Activated T-helper 1 cell treated with anti-CD3 and anti-CD28 coated beads, Interleukin-12 subunit alpha, Interleukin-12 subunit beta, Interleukin-2, Interleukin-4 antibody, amounts not matched to agents 30 ng/mL and 10 ng/mL and 1 ng/mL, durations not matched to agents 14 hours and 24 hours and 36 hours (primary cell): ENCODE measurements at regions of chr12 and their contacts with region 1.

Region 1: GRCh38 chr12:95217377-95218149 is at the starts of genes FGD6 and VEZT:
- DNase-seq: peak; percentile 98
- H3K4me3 Mint-ChIP-seq: peak within 1 kb of the TSS; percentile 97
- H3K27ac Mint-ChIP-seq: peak within 1 kb of the TSS; percentile 98
- H3K4me1 Mint-ChIP-seq: peaks cover 37% of the 10 kb centered on the region
- H3K27me3 Mint-ChIP-seq: peaks cover 9% of the 10 kb centered on the region
- total RNA-seq, gene FGD6: 0.64 and 0.86 TPM in 2 replicates
- total RNA-seq, gene VEZT: 58.1 and 64.7 TPM in 2 replicates

Region 2: DNA sequence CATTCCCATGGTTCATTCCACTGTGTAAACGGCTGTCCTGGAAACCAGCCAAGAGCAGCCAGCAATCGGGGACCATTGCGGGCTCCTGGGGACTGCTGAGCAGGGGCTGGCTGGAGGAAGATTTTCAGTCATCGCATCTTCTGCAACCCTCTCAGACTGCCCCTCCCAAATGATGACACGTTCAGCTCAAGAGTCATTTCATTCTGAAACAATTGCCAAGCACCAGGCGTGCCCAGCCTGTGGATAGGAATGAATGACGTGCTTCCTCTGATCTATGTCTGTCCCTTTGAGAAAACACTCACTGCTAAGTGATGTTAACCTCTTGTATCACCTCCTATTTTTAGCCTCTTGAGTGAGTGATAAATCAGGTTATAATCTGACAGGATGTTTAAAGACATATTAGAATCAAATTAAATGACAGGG is 276.1 kb before region 1 on chr12:
- intact Hi-C with region 1: loop called (anchors 5 kb)
- DNase-seq: peak; percentile 39
- H3K4me3 Mint-ChIP-seq: no peak overlapping the region
- H3K27ac Mint-ChIP-seq: peak overlapping the region; percentile 63
- H3K4me1 Mint-ChIP-seq: peaks cover 43% of the 10 kb centered on the region
- H3K27me3 Mint-ChIP-seq: no peaks in the 10 kb centered on the region

Region 3: GRCh38 chr12:95072900-95073697 is 144.5 kb before region 1 on chr12 and contains the start of gene NR2C1:
- intact Hi-C with region 1: loop called (anchors 1 kb)
- DNase-seq: peak; percentile 90
- H3K4me3 Mint-ChIP-seq: peak within 1 kb of the TSS; percentile 93
- H3K27ac Mint-ChIP-seq: peak within 1 kb of the TSS; percentile 92
- H3K4me1 Mint-ChIP-seq: peaks cover 16% of the 10 kb centered on the region
- H3K27me3 Mint-ChIP-seq: peaks cover 7% of the 10 kb centered on the region
- total RNA-seq, gene NR2C1: 26.1 and 27.3 TPM in 2 replicates

Region 4: GRCh38 chr12:95117178-95117599 is 100.4 kb before region 1 on chr12:
- intact Hi-C with region 1: loop called (anchors 1 kb)
- DNase-seq: peak; percentile 26
- H3K4me3 Mint-ChIP-seq: no peak overlapping the region
- H3K27ac Mint-ChIP-seq: no peak overlapping the region
- H3K4me1 Mint-ChIP-seq: no peaks in the 10 kb centered on the region
- H3K27me3 Mint-ChIP-seq: no peaks in the 10 kb centered on the region

Region 5: DNA sequence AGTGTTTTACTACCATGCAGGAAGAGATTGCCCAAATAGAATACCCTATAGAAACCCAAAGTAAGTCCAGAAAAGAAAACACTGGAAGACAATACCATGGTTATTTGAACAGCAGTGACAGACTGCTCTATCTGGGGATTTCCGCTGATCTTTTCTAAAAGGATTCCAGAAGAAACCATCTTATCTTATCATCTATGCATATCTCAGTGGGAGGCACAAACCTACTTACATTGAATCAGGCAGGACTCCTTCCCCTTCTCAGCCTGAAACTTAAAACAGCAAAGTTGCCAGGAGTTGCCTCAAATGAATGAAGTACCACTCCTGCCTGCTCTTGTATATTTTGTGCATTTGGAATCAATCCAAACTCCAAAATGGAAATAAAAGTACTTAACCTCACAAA is 87.5 kb before region 1 on chr12:
- intact Hi-C with region 1: no loop called
- DNase-seq: no peak
- H3K4me3 Mint-ChIP-seq: no peak overlapping the region
- H3K27ac Mint-ChIP-seq: no peak overlapping the region
- H3K4me1 Mint-ChIP-seq: no peaks in the 10 kb centered on the region
- H3K27me3 Mint-ChIP-seq: no peaks in the 10 kb centered on the region

Region 6: GRCh38 chr12:95164656-95165055 is 52.9 kb before region 1 on chr12:
- intact Hi-C with region 1: no loop called
- DNase-seq: no peak
- H3K4me3 Mint-ChIP-seq: no peak overlapping the region
- H3K27ac Mint-ChIP-seq: no peak overlapping the region
- H3K4me1 Mint-ChIP-seq: no peaks in the 10 kb centered on the region
- H3K27me3 Mint-ChIP-seq: peaks cover 9% of the 10 kb centered on the region

Region 7: DNA sequence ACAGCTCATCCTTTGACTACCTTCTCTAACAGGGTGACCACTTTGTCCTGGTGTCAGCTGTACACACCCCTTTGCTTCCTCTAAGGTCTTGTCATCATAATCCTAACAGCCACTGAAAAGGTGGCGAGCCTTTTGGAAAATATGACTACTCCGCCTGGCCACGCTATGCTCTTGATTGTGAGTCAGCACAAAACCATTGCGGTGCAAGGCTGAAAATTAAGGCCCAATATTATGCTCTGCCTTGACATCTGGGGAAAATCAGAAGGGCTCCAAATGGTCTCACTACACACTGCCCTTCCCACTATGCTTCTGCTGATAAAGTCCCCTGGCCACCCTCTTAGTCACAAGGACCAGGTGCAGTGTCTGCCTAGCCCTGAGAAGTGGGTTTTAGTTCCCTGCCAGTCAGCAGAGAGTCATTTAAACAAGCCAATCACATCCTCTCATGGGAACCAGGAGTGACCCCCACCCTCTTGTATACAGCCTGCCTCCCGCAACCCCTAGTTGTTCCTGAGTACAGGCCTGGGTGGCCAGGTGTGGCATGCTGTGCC is 34.6 kb before region 1 on chr12:
- intact Hi-C with region 1: no loop called
- DNase-seq: no peak
- H3K4me3 Mint-ChIP-seq: no peak overlapping the region
- H3K27ac Mint-ChIP-seq: no peak overlapping the region
- H3K4me1 Mint-ChIP-seq: no peaks in the 10 kb centered on the region
- H3K27me3 Mint-ChIP-seq: peaks cover 2% of the 10 kb centered on the region

Region 8: DNA sequence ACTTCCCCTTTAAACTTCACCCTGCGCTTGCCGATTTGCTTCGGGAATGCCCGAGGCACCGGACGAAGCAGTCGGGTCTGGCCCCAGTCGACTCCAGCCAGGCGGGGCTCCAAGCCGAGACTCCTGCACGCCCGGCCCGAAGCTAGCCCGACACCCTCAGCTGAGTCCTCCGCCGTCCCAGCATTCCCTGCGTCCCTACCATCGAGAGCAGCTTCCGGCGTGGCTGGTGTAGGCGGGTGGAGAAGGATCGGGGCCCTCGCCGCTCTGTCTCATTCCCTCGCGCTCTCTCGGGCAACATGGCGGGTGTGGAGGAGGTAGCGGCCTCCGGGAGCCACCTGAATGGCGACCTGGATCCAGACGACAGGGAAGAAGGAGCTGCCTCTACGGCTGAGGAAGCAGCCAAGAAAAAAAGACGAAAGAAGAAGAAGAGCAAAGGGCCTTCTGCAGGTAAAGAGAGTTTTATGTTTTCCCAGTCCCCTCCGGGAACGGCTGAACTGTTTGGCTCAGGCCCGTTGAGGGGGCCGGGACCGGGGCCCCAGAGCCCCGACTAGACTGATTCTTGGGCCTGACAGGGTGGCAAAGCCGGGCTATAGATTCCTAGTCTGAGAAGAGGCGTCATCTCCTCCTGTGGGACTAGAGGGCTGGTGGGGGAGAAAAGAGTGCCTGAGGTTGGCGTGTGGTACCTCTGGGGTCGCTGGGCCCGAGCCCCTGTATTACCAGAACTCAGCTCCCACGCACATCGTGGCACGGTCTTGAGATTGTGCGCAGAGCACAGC is 256.5 kb after region 1 on chr12 and contains the start of gene METAP2:
- intact Hi-C with region 1: loop called (anchors 1 kb)
- DNase-seq: peak; percentile 86
- H3K4me3 Mint-ChIP-seq: peak within 1 kb of the TSS; percentile 100
- H3K27ac Mint-ChIP-seq: peak within 1 kb of the TSS; percentile 100
- H3K4me1 Mint-ChIP-seq: peaks cover 46% of the 10 kb centered on the region
- H3K27me3 Mint-ChIP-seq: no peaks in the 10 kb centered on the region
- total RNA-seq, gene METAP2: 118 and 121 TPM in 2 replicates

Region 9: DNA sequence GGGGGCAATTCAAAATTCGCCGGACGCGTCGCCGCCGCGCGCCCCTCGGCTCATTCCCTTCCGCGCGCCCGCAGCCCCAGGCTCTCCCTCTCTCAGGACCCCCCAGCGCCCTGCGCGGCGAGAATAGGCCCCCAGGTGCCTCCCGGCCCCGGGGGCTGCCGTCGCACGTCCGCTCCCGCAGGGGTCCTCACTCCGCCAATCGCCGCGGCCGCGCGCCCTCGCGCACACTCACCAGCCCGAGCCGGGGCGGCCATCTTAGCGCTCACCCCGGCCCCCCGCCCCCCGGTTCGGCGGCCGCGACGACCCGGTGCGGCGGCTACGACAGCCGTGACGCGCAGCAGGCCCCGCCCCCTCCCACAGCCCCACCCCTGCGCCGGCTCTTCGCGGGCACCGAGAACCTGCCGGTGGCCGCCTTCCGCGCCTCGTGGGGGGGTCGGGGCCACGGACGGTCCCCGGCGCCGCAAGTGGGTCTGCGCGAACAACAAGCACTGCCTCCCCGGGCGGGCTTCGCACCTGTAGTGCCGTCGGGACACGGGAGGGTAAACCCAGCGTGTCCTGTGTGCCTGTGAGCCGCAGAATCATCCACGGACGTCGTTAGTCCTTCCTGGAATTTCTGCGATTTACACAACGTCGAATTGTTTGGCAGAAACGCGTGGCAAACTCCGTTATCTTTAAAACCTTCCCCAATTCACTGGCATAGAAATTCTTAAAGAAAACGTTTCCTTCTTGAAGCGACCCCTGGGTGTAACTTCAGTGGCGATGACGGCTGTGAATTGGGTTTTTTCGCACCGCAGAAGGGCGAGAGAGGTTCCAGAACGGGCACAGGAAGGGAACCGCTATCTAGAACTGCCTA is 331.2 kb after region 1 on chr12:
- intact Hi-C with region 1: loop called (anchors 1 kb)
- DNase-seq: peak; percentile 66
- H3K4me3 Mint-ChIP-seq: peak overlapping the region; percentile 91
- H3K27ac Mint-ChIP-seq: peak overlapping the region; percentile 62
- H3K4me1 Mint-ChIP-seq: peaks cover 34% of the 10 kb centered on the region
- H3K27me3 Mint-ChIP-seq: peaks cover 3% of the 10 kb centered on the region

Region 10: GRCh38 chr12:96194971-96195844 is 977.6 kb after region 1 on chr12:
- intact Hi-C with region 1: loop called (anchors 5 kb)
- DNase-seq: peak; percentile 68
- H3K4me3 Mint-ChIP-seq: peak overlapping the region; percentile 96
- H3K27ac Mint-ChIP-seq: peak overlapping the region; percentile 98
- H3K4me1 Mint-ChIP-seq: peaks cover 49% of the 10 kb centered on the region
- H3K27me3 Mint-ChIP-seq: no peaks in the 10 kb centered on the region